ENCODE measurements at regions of chr11 and their contacts with region 1.

Region 1: DNA sequence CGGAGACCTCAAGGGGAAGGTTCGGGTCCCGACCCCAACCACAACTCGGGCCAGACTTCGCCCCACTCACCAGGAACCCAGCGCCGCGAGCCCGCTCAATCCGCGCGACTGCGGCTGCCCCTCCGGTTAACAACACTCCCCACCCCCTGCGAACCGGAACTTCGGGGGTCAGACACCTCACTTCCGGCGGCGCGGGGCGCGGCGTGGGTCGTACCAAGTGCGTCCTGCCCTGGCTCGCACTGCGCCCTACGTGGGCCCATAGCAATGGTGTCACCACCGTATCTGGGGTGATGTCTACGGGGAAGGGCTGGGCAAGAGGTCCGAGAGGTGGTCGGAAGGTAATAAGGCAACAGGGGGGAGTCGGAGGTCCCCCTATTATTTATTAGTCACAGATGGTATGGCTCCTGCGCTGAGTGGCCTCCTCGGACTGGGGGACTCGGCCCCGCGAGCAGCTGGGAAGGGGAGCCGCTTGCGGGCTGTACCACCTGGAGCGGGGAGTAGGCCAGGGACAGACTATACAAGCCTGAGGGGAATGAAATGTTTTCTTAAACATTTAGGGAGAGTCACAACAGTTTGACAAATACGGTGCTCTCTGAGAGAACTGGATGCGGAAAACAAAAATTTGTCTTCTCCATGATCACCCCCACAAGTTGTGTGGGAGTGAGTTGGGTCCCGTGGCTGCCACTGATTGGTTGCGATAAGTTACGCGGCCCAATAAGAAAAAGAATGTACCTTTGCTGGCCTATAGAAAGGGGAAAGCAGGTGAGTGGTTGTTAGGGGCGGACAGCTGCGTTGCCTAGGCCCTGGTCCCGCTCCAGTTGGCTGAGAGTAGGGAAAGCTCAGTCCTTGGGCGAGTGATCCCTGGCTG is at the start of gene SYVN1:
- DNase-seq: peak; percentile 95
- ATAC-seq: peak; percentile 88
- H3K4me3 ChIP-seq: peak within 1 kb of the TSS; percentile 81 to 98
- H3K27ac ChIP-seq: peak within 1 kb of the TSS; percentile 89
- H3K4me1 ChIP-seq: peaks cover 9 to 28% of the 10 kb centered on the region in 2 experiments; a peak in 3 of 4 replicates
- H3K27me3 ChIP-seq: no peaks in the 10 kb centered on the region
- CTCF ChIP-seq: no peak
- POLR2A ChIP-seq: peak; percentile 26
- RAD21 ChIP-seq: no peak
- total RNA-seq, gene SYVN1: 45.9 TPM

Region 2: GRCh38 chr11:65111744-65112414 is 22.7 kb before region 1 on chr11 and contains the start of gene TM7SF2:
- CTCF ChIA-PET with region 1: interaction called, 7 read pairs
- POLR2A ChIA-PET with region 1: interaction called, 12 read pairs
- RAD21 ChIA-PET with region 1: no interaction called
- intact Hi-C with region 1: no loop called
- DNase-seq: peak; percentile 89
- ATAC-seq: peak; percentile 81
- H3K4me3 ChIP-seq: peak within 1 kb of the TSS; percentile 66 to 76
- H3K27ac ChIP-seq: peak within 1 kb of the TSS; percentile 82
- H3K4me1 ChIP-seq: peaks cover 22 to 50% of the 10 kb centered on the region in 2 experiments
- H3K27me3 ChIP-seq: no peaks in the 10 kb centered on the region
- CTCF ChIP-seq: no peak
- POLR2A ChIP-seq: peak; percentile 99
- RAD21 ChIP-seq: no peak
- total RNA-seq, gene TM7SF2: 52.9 TPM

Region 3: DNA sequence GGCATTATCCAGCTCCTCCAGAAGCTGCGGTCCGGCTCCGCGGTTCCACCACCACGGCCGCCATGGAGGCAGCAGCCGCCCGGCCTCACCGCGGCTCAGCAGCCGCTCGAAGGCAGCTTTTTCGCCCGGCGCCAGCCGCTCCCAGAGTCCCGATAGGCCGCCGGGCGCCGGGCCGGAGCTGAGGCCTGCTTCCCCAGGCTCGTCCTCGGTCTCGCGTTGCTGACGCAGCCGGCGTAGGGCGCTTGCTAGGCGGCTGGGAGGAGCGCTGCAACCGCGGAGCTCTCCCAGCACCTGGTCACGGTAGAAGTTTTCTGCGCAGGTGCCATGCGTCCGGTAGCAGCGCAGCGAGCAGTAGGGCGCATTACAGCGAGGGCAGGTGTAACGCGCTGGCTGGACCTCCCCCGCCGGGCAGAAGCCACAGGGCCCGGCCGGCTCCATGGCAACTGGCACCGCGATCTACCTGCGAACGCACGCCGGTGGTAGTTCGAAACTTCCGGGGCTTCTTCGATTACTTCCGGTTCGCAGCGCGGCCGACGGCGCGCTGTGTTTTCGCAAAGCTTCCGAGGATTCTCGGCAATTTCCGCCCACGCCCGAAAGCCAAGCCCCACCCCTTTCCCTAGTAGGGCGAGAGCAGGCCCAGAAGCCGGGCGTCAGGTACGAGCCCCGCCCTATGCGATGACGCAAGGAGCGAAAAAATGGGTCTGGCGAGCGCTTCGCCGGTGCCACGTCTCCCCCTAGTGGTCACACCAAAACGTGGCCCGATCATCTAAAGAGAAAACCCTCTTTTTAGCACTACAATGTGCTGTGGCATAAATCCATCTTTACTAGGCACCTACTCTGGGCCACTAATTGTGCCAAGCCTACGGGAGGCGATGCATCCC is 17.2 kb before region 1 on chr11 and contains the start of gene ZNHIT2:
- CTCF ChIA-PET with region 1: interaction called, 6 read pairs
- POLR2A ChIA-PET with region 1: interaction called, 52 read pairs
- RAD21 ChIA-PET with region 1: interaction called in 1 of 2 experiments, 3 read pairs
- intact Hi-C with region 1: loop called (anchors 1 kb)
- DNase-seq: peak; percentile 98
- ATAC-seq: peak; percentile 70
- H3K4me3 ChIP-seq: peak within 1 kb of the TSS; percentile 88 to 90
- H3K27ac ChIP-seq: peak within 1 kb of the TSS; percentile 95
- H3K4me1 ChIP-seq: peaks cover 17 to 45% of the 10 kb centered on the region in 2 experiments; a peak in 3 of 4 replicates
- H3K27me3 ChIP-seq: no peaks in the 10 kb centered on the region
- CTCF ChIP-seq: peak in 2 of 3 experiments; percentile 83 to 93; a peak in 4 of 6 replicates
- POLR2A ChIP-seq: peak; percentile 87
- RAD21 ChIP-seq: no peak
- total RNA-seq, gene ZNHIT2: 18.8 TPM

Region 4: DNA sequence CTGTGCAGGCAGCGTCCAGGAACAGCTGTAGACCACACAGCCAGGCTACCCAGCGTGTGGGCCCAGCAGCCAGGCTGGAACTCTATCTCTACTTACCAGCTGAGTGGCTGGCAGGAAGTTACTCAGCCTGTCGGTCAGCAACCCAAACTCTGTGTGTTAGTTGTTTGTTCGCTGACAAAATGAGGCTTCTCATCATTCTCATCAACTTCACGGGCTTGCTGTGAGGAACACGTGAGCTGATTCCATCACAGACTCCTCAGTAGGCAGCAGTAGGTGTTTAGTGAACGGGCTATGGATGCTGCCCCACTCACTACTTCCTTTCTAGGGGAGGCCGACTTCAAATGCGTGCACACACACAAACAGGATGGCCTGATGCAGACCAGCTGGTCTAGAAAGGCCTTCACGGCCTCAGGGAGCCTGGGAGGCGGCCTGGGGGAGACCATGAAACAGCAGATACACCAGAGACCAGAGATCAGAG is 34.6 kb after region 1 on chr11:
- CTCF ChIA-PET with region 1: no interaction called
- POLR2A ChIA-PET with region 1: interaction called, 16 read pairs
- RAD21 ChIA-PET with region 1: no interaction called
- intact Hi-C with region 1: no loop called
- DNase-seq: no peak
- ATAC-seq: no peak
- H3K4me3 ChIP-seq: no peak overlapping the region
- H3K27ac ChIP-seq: no peak overlapping the region
- H3K4me1 ChIP-seq: peaks cover 9 to 16% of the 10 kb centered on the region in 2 experiments; a peak in 3 of 4 replicates
- H3K27me3 ChIP-seq: no peaks in the 10 kb centered on the region
- CTCF ChIP-seq: no peak
- POLR2A ChIP-seq: no peak
- RAD21 ChIP-seq: no peak

Measured in HCT116 (cell line).